A549 (cell line): ENCODE measurements at regions of chr12 and their contacts with region 1.

Region 1: DNA sequence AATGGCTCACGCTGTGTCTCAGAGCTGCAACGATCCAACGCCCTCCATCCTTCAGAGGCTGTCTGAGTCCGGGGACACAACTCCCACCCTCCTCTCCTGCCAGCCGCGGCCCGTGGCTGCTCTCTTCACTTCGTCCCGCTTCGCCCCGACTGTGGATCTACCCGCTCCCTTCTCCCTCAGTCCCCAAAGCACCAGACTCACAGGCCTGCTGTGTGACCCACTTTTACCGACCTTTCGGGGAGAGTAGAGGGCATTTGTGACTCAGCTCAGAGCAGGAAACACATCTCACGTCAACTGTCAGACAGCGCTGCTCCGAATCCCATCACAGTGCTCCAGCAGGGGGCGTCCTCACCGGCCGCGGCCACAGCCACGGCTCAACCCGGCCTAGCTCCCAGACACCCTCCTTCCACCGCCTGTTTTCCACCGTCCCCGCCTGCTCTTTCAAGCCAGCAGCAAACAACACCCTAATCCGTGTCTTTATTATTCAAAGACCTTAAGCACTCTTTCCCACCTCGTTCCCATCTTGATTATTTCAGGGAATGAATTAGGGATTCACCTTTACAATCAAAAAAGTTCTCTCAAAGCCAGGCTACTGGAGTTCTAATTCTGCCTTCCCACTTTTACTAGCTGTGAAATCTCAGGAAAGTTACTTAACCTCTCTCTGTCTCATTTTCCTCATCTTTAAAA is 5.0 kb upstream of the AQP2 start:
- DNase-seq: peak; percentile 82 to 93
- ATAC-seq: peak; percentile 97 to 99
- H3K4me3 ChIP-seq: no peak overlapping the region
- H3K27ac ChIP-seq: peak overlapping the region; percentile 6 to 59; a peak in 3 of 6 replicates
- H3K4me1 ChIP-seq: 0 out of 3 replicates have a peak, but pooled peaks cover 7% of the 10 kb centered on the region
- CTCF ChIP-seq: peak; percentile 91
- EP300 ChIP-seq: no peak
- POLR2A ChIP-seq: no peak
- RAD21 ChIP-seq: peak; percentile 54 to 55; a peak in 4 of 5 replicates

Region 2: DNA sequence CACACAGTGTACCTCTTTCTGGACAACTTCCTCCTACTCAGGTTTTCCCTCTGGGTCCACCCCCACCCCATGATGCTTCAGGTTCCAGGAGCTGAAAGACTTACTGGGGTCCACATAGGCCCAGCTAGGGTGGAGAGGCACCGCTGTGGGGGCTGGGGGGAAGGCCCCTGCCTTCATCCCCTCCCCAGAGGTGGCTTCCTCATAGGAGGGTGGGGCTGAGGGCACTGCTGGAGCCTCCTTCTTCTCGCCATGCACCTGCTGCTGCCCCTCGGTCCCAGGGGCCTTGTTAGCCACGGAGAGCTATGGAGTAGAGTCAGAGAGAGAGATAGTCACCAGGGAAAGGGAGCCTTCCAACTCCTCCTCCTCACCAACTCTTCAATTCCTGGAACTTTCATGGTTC is 44.5 kb before region 1 on chr12:
- CTCF ChIA-PET with region 1: interaction called, 11 read pairs
- POLR2A ChIA-PET with region 1: no interaction called
- DNase-seq: no peak
- ATAC-seq: no peak
- H3K4me3 ChIP-seq: no peak overlapping the region
- H3K27ac ChIP-seq: no peak overlapping the region
- H3K4me1 ChIP-seq: no peaks in the 10 kb centered on the region
- CTCF ChIP-seq: no peak
- EP300 ChIP-seq: no peak
- POLR2A ChIP-seq: no peak
- RAD21 ChIP-seq: no peak

Region 3: GRCh38 chr12:49920241-49920921 is 25.2 kb before region 1 on chr12:
- CTCF ChIA-PET with region 1: interaction called, 15 read pairs
- POLR2A ChIA-PET with region 1: no interaction called
- DNase-seq: no peak
- ATAC-seq: no peak; a peak in 1 of 6 replicates
- H3K4me3 ChIP-seq: no peak overlapping the region
- H3K27ac ChIP-seq: no peak overlapping the region
- H3K4me1 ChIP-seq: no peaks in the 10 kb centered on the region
- CTCF ChIP-seq: no peak
- EP300 ChIP-seq: no peak
- POLR2A ChIP-seq: no peak
- RAD21 ChIP-seq: no peak

Region 4: DNA sequence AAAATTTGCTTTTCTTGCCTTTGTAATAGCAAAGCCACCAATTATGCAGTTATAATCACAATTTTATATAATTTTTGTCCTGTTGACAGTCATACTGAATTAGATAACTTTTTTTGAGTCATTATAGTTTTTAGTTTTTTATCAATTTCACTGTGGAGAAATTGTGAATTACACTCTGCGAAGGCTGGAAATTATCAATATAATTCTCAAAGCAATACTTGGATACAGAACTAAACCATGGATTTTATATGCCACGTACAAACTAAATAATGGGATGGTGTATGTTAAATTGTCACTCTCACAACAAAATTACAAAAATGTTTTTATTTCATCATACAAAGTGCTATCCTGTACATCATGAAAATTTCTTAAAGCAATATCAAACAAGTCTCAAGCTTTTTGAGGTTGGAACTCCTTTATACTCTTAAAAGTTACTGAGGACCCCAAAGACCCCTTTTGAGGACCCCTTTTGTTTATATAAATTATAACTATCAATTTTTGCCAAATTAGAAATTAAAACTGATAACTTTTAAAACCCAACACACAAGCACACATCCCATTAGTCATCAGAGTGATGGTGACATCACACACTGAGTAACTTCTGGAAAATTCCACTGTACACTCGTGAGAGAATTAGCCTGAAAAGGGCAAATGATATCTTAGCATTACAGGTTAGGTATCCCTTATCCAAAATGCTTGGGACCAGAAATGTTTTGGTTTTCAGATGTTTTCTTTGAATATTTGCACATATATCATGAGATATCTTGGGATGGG is 14.8 kb before region 1 on chr12:
- CTCF ChIA-PET with region 1: interaction called, 45 read pairs
- POLR2A ChIA-PET with region 1: no interaction called
- DNase-seq: no peak
- ATAC-seq: peak; percentile 40 to 54; a peak in 1 of 6 replicates
- H3K4me3 ChIP-seq: no peak overlapping the region
- H3K27ac ChIP-seq: no peak overlapping the region
- H3K4me1 ChIP-seq: peaks cover 7% of the 10 kb centered on the region; the same call in 2 of the 3 replicates
- CTCF ChIP-seq: no peak
- EP300 ChIP-seq: no peak
- POLR2A ChIP-seq: no peak
- RAD21 ChIP-seq: no peak

Region 5: DNA sequence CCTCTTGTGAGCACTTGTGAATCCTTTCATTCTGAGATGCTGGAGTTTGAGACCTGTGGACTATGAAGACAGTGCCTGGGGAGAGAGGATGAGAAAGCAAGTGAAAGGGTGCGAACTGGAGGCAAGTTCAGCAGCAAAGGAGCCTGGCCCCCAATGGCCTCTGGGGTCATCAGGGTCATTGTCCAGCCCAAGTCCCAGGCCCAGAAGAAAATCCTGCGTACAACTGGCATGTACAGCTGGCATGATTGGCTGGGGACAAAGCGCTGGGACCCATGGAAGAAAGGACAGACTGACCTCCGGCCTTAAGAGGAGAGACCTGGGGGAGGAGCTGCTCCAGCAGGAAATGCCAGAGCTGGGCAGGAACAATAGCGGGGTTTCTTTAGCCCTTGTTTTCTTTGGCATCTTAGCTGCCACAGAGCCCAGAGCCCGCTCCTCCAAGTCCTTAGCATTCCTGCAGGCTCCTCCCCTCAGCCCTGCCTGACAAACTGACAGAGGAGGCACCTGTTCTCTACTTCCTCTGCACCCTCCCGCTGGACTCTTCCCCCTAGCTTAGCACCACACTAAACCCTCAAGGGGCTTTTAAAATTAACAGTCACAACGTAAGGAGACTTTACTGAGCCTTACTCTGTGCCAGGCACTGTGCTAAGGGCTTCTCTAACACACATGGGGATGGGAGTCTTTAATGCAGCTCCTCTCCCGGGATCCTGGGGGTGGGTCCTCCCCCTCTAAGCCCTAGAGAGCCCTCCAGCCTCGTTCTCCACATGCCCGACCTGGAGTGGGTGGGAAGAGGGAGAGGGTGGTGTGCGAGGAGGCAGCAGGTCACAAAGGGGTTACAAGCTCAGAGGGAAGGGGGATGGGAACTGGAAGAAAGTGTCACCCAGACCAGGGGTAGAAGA is 14.3 kb after region 1 on chr12:
- CTCF ChIA-PET with region 1: interaction called, 193 read pairs
- POLR2A ChIA-PET with region 1: no interaction called
- DNase-seq: peak; percentile 54 to 64
- ATAC-seq: peak; percentile 9 to 52; a peak in 3 of 6 replicates
- H3K4me3 ChIP-seq: no peak overlapping the region
- H3K27ac ChIP-seq: peak overlapping the region in 1 of 2 experiments; percentile 59; a peak in 3 of 6 replicates
- H3K4me1 ChIP-seq: peaks cover 27% of the 10 kb centered on the region
- CTCF ChIP-seq: no peak
- EP300 ChIP-seq: no peak
- POLR2A ChIP-seq: no peak
- RAD21 ChIP-seq: no peak

Region 6: GRCh38 chr12:50066433-50066832 is 120.9 kb after region 1 on chr12:
- CTCF ChIA-PET with region 1: interaction called, 12 read pairs
- POLR2A ChIA-PET with region 1: no interaction called
- DNase-seq: peak in 1 of 2 experiments; percentile 72
- ATAC-seq: peak in 1 of 2 experiments; percentile 57; a peak in 3 of 6 replicates
- H3K4me3 ChIP-seq: no peak overlapping the region
- H3K27ac ChIP-seq: no peak overlapping the region
- H3K4me1 ChIP-seq: peaks cover 12% of the 10 kb centered on the region; the same call in 2 of the 3 replicates
- CTCF ChIP-seq: no peak
- EP300 ChIP-seq: no peak
- POLR2A ChIP-seq: no peak
- RAD21 ChIP-seq: no peak